CD4-positive, alpha-beta memory T cell (primary cell): ENCODE measurements at regions of chr9 and their contacts with region 1.

Region 1: DNA sequence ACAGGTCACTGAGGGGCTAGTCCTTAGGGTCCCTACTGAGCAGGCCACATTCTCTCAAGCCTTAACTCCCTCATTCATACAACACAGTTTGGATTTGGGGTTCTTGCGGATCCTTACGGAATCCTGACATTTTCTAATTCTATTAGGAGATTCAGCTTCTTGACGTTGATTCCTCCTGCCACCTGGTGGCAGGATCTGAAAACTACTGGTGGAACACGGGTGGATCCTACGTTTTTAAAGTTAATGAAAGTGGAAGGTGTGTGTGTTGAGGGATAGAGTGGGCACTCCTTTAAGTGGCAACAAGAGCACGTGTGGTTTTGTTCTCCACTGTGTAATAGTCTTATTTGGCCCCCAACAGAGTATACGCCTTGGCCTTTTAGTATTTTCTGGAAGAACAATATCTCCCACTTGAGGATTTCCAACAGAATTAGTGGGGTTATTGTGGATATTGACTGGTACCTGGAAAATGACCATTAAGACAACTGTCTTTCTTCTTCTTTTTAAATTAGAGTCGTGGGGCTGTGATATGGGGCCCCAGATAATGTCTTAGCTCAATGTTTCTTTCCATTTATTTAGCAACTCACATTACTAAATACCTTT is 25.2 kb downstream of the SLC28A3 start:
- DNase-seq: peak in 4 of 5 donors; percentile 36 to 48 (median 44)
- H3K4me3 ChIP-seq: no peak overlapping the region
- H3K4me3 Mint-ChIP-seq: peak overlapping the region in 1 of 8 donors; percentile 26
- H3K27ac ChIP-seq: no peak overlapping the region
- H3K27ac Mint-ChIP-seq: peak overlapping the region in 1 of 7 donors; percentile 31
- H3K4me1 ChIP-seq: peaks cover 4% of the 10 kb centered on the region
- H3K4me1 Mint-ChIP-seq: peaks cover 0 to 2% (median 0%) of the 10 kb centered on the region in 4 donors
- H3K27me3 ChIP-seq: no peaks in the 10 kb centered on the region
- H3K27me3 Mint-ChIP-seq: no peaks in the 10 kb centered on the region

Region 2: GRCh38 chr9:83937911-83938323 is 377.5 kb before region 1 on chr9:
- CTCF ChIA-PET with region 1: interaction called, 20 read pairs
- POLR2A ChIA-PET with region 1: no interaction called
- intact Hi-C with region 1: loop called (anchors 1 kb)
- DNase-seq: peak; percentile 47 to 72 (median 67)
- H3K4me3 ChIP-seq: no peak overlapping the region
- H3K4me3 Mint-ChIP-seq: peak overlapping the region in 1 of 8 donors; percentile 2
- H3K27ac ChIP-seq: no peak overlapping the region
- H3K27ac Mint-ChIP-seq: no peak overlapping the region
- H3K4me1 ChIP-seq: no peaks in the 10 kb centered on the region
- H3K4me1 Mint-ChIP-seq: no peaks in the 10 kb centered on the region
- H3K27me3 ChIP-seq: no peaks in the 10 kb centered on the region
- H3K27me3 Mint-ChIP-seq: no peaks in the 10 kb centered on the region

Region 3: GRCh38 chr9:84170521-84171141 is 144.7 kb before region 1 on chr9:
- CTCF ChIA-PET with region 1: interaction called, 7 read pairs
- POLR2A ChIA-PET with region 1: no interaction called
- intact Hi-C with region 1: loop called (anchors 1 kb)
- DNase-seq: no peak
- H3K4me3 ChIP-seq: no peak overlapping the region
- H3K4me3 Mint-ChIP-seq: no peak overlapping the region
- H3K27ac ChIP-seq: no peak overlapping the region
- H3K27ac Mint-ChIP-seq: no peak overlapping the region
- H3K4me1 ChIP-seq: no peaks in the 10 kb centered on the region
- H3K4me1 Mint-ChIP-seq: no peaks in the 10 kb centered on the region
- H3K27me3 ChIP-seq: no peaks in the 10 kb centered on the region
- H3K27me3 Mint-ChIP-seq: peaks cover 3% of the 10 kb centered on the region in 2 donors

Region 4: DNA sequence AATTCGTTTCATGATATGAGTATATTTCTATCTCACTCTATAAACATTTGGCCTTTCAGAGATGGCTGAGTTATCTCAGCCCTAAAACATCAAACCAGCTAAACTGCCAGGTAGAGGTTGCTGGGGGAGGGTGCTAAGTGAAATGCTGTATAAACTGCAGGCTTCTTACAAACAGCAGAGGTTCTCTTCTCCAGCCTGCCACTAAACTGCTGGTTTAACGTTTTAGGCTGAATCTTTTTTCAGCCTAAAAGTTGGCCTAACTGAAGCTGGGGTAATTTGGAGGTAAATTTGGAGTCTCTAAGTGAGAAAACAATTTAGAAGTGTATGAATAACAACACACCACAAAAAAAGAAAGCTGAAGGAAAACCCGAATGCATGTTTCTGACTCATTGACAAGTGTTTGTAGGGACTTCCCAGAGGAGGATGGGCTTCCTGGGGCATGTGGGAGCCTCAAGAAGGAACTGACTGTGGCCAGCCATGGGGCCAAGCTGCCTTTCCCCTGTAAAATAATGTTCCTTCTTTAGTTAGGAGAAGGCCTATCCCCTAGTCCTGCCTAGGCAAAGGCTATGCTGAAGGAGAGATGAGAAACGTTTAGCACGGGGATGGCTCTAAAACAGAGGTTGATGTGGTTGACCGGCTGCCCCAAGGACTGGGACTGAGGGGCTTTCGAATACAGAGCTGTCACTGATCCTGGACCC is 19.1 kb before region 1 on chr9:
- CTCF ChIA-PET with region 1: interaction called, 10 read pairs
- POLR2A ChIA-PET with region 1: no interaction called
- intact Hi-C with region 1: loop called (anchors 2 kb)
- DNase-seq: peak in 4 of 5 donors; percentile 10 to 56 (median 18)
- H3K4me3 ChIP-seq: no peak overlapping the region
- H3K4me3 Mint-ChIP-seq: peak overlapping the region in 4 of 8 donors; percentile 18 to 74 (median 57)
- H3K27ac ChIP-seq: peak overlapping the region; percentile 19
- H3K27ac Mint-ChIP-seq: peak overlapping the region; percentile 51 to 92 (median 86)
- H3K4me1 ChIP-seq: peaks cover 48% of the 10 kb centered on the region
- H3K4me1 Mint-ChIP-seq: peaks cover 38 to 56% (median 45%) of the 10 kb centered on the region in 4 donors
- H3K27me3 ChIP-seq: no peaks in the 10 kb centered on the region
- H3K27me3 Mint-ChIP-seq: no peaks in the 10 kb centered on the region